Transverse colon (tissue), 4 donors: ENCODE measurements at regions of chr5 and their contacts with region 1.

Region 1: GRCh38 chr5:138542956-138543729 is at the start of gene ETF1:
- DNase-seq: peak; percentile 100
- H3K4me3 ChIP-seq: peak within 1 kb of the TSS; percentile 84 to 90 (median 87)
- H3K27ac ChIP-seq: peak within 1 kb of the TSS; percentile 96 to 99 (median 98)
- H3K4me1 ChIP-seq: peaks cover 28 to 76% (median 46%) of the 10 kb centered on the region in 4 donors
- H3K27me3 ChIP-seq: no peaks in the 10 kb centered on the region
- CTCF ChIP-seq: peak in 1 of 5 experiments; percentile 31
- EP300 ChIP-seq: peak; percentile 57
- POLR2A ChIP-seq: peak; percentile 99
- total RNA-seq, gene ETF1: 39.8 to 66.6 (median 54.1) TPM

Region 2: GRCh38 chr5:138464008-138464387 is 79.1 kb before region 1 on chr5:
- in situ Hi-C with region 1: no loop called
- intact Hi-C with region 1: loop called (anchors 5 kb)
- DNase-seq: peak; percentile 97
- H3K4me3 ChIP-seq: peak overlapping the region; percentile 65 to 87 (median 80)
- H3K27ac ChIP-seq: peak overlapping the region; percentile 95 to 99 (median 98)
- H3K4me1 ChIP-seq: peaks cover 12 to 35% (median 21%) of the 10 kb centered on the region in 4 donors
- H3K27me3 ChIP-seq: no peaks in the 10 kb centered on the region
- CTCF ChIP-seq: peak; percentile 91 to 99 (median 95)
- EP300 ChIP-seq: no peak
- POLR2A ChIP-seq: peak; percentile 83

Region 3: DNA sequence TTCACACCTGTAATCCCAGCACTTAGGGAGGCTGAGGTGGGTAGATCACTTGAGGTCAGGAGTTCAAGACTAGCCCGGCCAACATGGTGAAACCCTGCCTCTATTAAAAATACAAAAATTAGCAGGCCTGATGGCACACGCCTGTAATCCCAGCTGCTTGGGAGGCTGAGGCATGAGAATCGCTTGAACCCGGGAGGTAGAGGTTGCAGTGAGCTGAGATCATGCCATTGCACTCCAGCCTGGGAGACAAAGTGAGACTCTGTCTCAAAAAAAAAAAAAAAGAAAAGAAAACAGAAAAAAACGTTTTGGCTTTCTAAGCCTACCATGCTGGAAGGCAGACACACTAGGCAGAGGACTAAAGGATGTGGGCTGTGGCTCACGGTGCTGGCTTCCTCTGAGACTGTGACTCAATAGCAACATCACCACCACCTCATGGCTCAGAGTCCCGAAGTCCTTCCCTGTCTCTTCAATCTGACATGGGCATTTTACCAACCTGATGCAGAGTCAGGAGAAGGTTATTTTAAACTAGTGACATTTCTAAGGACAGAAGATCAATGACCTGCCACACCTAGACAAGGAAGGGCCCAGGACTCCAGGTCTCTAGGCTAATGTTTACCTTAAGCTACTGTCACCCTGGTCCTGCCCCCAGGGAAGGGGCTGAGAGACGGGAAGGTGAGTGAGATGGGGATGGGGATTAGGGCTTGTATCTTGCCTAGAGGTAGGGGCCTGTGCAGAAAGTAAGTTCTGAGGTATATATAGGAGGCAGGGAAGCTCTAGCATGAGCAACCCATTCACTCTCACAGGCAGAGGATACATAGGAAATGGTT is 915.6 kb after region 1 on chr5:
- in situ Hi-C with region 1: no loop called
- intact Hi-C with region 1: no loop called
- DNase-seq: peak; percentile 54
- H3K4me3 ChIP-seq: no peak overlapping the region
- H3K27ac ChIP-seq: peak overlapping the region; percentile 38 to 55 (median 52)
- H3K4me1 ChIP-seq: peaks cover 0 to 19% (median 9%) of the 10 kb centered on the region in 4 donors
- H3K27me3 ChIP-seq: no peaks in the 10 kb centered on the region
- CTCF ChIP-seq: no peak
- EP300 ChIP-seq: no peak
- POLR2A ChIP-seq: no peak